Activated CD8-positive, alpha-beta T cell treated with anti-CD3 and anti-CD28 coated beads, Interleukin-2, amount 10 ng/mL, durations not matched to agents 7 days and 5 days (primary cell): ENCODE measurements at regions of chr6 and their contacts with region 1.

Region 1: GRCh38 chr6:11194356-11195218 is 37.9 kb downstream of the NEDD9 start:
- DNase-seq: no peak
- ATAC-seq: no peak
- H3K4me3 Mint-ChIP-seq: no peak overlapping the region
- H3K27ac Mint-ChIP-seq: no peak overlapping the region
- H3K4me1 Mint-ChIP-seq: peaks cover 52% of the 10 kb centered on the region
- H3K27me3 Mint-ChIP-seq: no peaks in the 10 kb centered on the region

Region 2: DNA sequence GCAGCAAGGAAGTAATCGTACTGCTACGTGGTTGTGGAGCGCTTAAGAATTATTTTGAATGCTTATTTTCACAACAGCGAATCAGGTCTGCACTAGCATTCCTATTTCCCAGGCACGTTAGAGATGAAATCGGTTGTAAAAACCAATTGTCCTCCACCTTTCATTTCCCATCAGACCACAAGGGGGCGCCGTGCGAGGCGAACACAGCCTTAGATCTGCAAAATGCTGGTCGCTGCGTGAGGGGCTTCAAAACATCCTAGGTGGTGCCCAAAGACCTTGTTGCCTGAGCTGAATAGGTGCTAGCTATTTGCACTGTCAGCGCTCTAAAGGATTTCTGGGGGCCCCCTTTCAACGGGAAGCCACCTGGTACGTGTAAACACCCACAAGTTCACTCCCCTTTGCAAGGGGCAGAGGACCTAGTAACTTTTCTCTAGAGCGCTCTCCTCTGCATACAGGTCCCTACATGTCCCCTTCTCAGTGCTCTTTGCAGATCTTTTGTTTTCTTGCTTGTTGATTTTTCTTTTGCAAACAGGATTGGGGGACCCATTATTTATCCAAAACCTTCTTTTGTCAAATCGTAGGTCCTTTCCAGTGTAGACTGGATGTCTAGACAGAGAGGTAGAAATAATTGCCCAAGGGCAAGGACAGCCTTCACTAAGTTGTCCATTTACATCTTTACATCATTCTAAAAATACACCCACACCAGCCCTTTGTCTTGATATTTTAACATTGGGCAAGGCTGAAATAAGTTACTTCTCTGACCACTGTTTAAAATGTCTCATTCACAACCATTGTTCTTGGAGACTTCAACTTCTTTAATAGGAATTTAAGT is 21.9 kb before region 1 on chr6:
- CTCF ChIA-PET with region 1: interaction called, 20 read pairs
- POLR2A ChIA-PET with region 1: no interaction called
- DNase-seq: peak; percentile 83
- ATAC-seq: peak; percentile 79
- H3K4me3 Mint-ChIP-seq: no peak overlapping the region
- H3K27ac Mint-ChIP-seq: no peak overlapping the region
- H3K4me1 Mint-ChIP-seq: peaks cover 22% of the 10 kb centered on the region
- H3K27me3 Mint-ChIP-seq: no peaks in the 10 kb centered on the region

Region 3: GRCh38 chr6:11353921-11354389 is 159.4 kb after region 1 on chr6:
- CTCF ChIA-PET with region 1: no interaction called
- POLR2A ChIA-PET with region 1: no interaction called
- DNase-seq: peak; percentile 72
- ATAC-seq: peak; percentile 81
- H3K4me3 Mint-ChIP-seq: peak overlapping the region; percentile 15
- H3K27ac Mint-ChIP-seq: peak overlapping the region; percentile 82
- H3K4me1 Mint-ChIP-seq: peaks cover 49% of the 10 kb centered on the region
- H3K27me3 Mint-ChIP-seq: no peaks in the 10 kb centered on the region

Region 4: GRCh38 chr6:11381801-11382513 is 187.4 kb after region 1 on chr6:
- CTCF ChIA-PET with region 1: no interaction called
- POLR2A ChIA-PET with region 1: interaction called, 11 read pairs
- DNase-seq: peak; percentile 87
- ATAC-seq: peak; percentile 95
- H3K4me3 Mint-ChIP-seq: peak overlapping the region; percentile 91
- H3K27ac Mint-ChIP-seq: peak overlapping the region; percentile 96
- H3K4me1 Mint-ChIP-seq: peaks cover 53% of the 10 kb centered on the region
- H3K27me3 Mint-ChIP-seq: peaks cover 2% of the 10 kb centered on the region